Posterior vena cava (tissue), 2 donors: ENCODE measurements at regions of chr14 and their contacts with region 1.

Region 1: DNA sequence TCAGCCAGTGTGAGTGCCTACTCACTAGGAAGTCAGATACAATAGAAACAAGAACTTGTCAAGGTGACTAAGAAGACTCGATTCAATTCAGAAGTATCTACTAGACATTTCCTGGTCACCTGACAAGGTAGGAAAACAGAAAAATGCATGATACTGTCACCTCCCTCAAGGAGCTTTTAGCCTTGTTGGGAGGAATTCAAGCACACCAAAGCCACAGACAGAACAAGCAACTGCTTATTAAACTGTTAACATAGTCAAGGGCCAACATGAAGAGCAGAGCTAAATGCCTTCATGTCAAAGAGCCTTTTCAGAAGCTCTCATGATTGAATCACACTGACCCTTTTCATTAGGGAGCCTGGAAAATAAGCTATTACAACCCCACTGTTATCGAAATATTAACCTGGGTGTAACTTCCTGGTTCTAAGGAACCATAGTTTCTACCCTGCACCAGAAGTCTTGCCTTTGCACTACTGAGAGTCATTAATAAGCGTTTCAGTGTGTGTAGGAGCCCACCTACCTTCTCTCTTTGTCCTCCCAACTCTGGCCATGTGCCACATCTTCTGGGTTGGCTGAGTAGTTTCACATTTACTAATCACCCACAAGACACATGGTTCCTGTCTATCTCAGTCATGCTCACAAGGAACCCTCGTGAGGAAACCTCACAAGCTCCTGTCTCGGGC is 31.0 kb upstream of the LGALS3 start:
- DNase-seq: no peak

Region 2: GRCh38 chr14:53655080-53655785 is 1442.8 kb before region 1 on chr14:
- intact Hi-C with region 1: loop called in 1 of 2 experiments (anchors 10 kb)
- DNase-seq: no peak

Region 3: GRCh38 chr14:55129428-55130195 is 31.6 kb after region 1 on chr14:
- intact Hi-C with region 1: loop called (anchors 5 kb)
- DNase-seq: peak; percentile 93

Region 4: GRCh38 chr14:55160989-55161388 is 63.0 kb after region 1 on chr14:
- intact Hi-C with region 1: loop called in 1 of 2 experiments (anchors 5 kb)
- DNase-seq: no peak

Region 5: GRCh38 chr14:55221186-55221585 is 123.2 kb after region 1 on chr14:
- intact Hi-C with region 1: no loop called
- DNase-seq: no peak

Region 6: GRCh38 chr14:56219666-56220413 is 1121.8 kb after region 1 on chr14:
- intact Hi-C with region 1: no loop called
- DNase-seq: no peak